Adrenal gland (tissue), 19 donors: ENCODE measurements at regions of chr21 and their contacts with region 1.

Region 1: DNA sequence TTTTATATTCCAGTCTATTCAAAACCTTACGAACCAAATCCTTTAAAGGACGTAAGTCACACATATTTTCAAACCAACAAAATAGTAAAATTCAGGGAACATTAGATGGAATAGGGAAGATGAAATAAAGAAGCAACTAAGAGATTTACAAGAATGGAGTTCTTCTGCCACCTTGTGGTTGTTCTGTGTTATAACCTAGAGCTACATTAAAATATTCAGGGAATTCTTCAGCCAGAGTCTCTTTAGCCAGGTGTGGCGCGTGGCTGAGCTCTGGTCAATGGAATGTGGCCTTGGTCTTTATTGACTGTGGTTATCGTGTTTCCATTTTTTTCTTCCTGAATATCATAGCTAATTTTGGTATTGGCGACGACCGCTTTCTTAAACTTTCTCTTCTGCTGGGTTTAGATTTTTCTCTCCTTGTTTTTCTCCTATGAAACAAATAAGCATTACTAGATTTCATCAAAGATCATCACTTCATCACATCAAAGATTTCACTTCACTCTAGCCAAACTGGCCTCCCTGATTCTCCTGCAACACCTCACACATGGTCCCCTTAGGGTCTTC is 221.3 kb downstream of the MRPL39 start:
- DNase-seq: peak in 6 of 7 donors; percentile 13 to 62 (median 41)
- H3K4me3 ChIP-seq: no peak overlapping the region
- H3K27ac ChIP-seq: no peak overlapping the region
- H3K4me1 ChIP-seq: no peaks in the 10 kb centered on the region
- H3K27me3 ChIP-seq: no peaks in the 10 kb centered on the region
- CTCF ChIP-seq: peak; percentile 76 to 94 (median 84)
- POLR2A ChIP-seq: no peak

Region 2: DNA sequence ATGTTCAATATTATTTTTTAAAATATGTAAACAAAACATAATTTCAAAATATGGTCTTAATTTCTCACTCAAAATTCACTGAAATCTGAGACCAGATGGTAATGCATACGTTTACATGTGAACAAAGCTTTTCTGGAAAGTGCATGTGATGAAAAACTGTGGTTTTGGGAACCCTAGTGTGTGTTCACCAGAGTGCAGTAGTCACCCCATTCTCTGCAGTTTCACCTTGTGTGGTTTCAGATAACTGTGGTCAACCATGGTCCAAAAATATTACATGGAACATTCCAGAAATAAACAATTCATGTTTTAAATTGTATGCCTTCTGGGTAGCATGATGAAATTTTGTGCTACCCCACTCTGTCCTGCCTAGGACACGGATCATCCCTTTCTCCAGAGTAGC is 1800.6 kb before region 1 on chr21:
- intact Hi-C with region 1: no loop called
- DNase-seq: no peak
- H3K4me3 ChIP-seq: no peak overlapping the region
- H3K27ac ChIP-seq: no peak overlapping the region
- H3K4me1 ChIP-seq: no peaks in the 10 kb centered on the region
- H3K27me3 ChIP-seq: no peaks in the 10 kb centered on the region
- CTCF ChIP-seq: no peak
- POLR2A ChIP-seq: no peak

Region 3: DNA sequence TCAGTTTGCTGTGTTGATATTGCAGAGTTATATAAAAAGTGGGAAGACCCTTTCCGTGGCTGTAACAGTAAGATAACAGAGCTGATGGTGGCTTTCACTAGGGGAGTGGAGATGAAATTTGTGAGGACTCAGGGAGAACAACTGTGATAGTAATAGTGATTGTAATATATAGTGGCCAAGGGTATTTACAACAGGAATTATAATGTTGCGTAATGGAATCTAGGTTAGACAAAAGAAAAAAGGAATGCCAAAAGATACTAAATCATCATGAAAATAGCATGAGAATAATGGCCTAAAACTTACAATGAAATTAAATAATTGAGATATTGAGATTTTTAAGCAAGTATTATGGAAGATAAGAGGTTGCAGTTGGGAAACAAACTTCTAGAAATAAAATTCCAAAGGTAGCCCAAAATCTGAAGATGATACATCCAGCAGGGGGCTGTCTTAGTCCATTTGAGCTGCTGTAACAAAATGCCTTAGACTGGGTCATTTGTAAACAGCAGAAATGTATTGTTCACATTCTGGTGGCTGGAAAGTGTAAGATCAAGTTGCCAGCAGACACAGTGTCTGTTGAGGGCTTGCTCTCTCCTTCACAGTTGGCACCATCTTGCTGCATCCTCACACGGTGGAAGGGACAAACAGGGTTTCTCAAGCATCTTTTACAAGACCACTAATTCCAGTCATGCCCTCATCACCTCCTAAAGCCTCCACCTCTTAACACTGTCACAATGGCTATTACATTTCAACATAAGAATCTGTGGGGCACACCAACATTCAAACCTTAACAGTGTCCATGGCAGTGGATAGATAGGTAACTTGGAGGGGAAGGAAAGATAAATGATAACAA is 489.9 kb before region 1 on chr21:
- intact Hi-C with region 1: loop called in 1 of 2 experiments (anchors 10 kb)
- DNase-seq: peak; percentile 15 to 61 (median 34)
- H3K4me3 ChIP-seq: no peak overlapping the region
- H3K27ac ChIP-seq: no peak overlapping the region
- H3K4me1 ChIP-seq: no peaks in the 10 kb centered on the region
- H3K27me3 ChIP-seq: no peaks in the 10 kb centered on the region
- CTCF ChIP-seq: peak; percentile 27 to 80 (median 72)
- POLR2A ChIP-seq: no peak

Region 4: DNA sequence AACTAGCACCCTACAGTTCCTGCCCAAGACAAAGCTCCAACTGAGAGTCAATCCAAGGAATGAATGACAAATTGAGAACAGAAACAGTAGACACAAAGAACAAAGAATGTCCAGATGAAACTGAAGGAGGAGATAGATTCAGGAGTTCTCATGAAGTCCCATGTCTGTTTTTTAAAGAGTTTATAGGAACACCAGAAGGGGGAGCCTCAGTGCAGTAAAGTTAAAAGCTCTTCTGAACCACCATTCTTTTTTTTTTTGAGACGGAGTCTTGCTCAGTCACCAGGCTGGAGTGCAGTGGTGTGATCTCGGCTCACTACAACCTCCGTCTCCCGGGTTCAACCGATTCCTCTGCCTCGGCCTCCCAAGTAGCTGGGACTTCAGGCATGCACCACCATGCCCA is 102.3 kb before region 1 on chr21:
- intact Hi-C with region 1: loop called in 1 of 2 experiments (anchors 10 kb)
- DNase-seq: peak in 1 of 7 donors; percentile 2
- H3K4me3 ChIP-seq: no peak overlapping the region
- H3K27ac ChIP-seq: no peak overlapping the region
- H3K4me1 ChIP-seq: no peaks in the 10 kb centered on the region
- H3K27me3 ChIP-seq: no peaks in the 10 kb centered on the region
- CTCF ChIP-seq: peak; percentile 20 to 38 (median 32)
- POLR2A ChIP-seq: no peak